OCI-LY7 (cell line): ENCODE measurements at regions of chr1 and their contacts with region 1.

Region 1: GRCh38 chr1:83637009-83637408 is 361.9 kb downstream of the TTLL7 start:
- DNase-seq: no peak
- H3K4me3 ChIP-seq: no peak overlapping the region
- H3K27ac ChIP-seq: no peak overlapping the region
- H3K4me1 ChIP-seq: peaks cover 10% of the 10 kb centered on the region
- CTCF ChIP-seq: no peak

Region 2: GRCh38 chr1:83626603-83627002 is 10.4 kb before region 1 on chr1:
- CTCF ChIA-PET with region 1: interaction called, 4 read pairs
- POLR2A ChIA-PET with region 1: interaction called, 17 read pairs
- intact Hi-C with region 1: no loop called
- DNase-seq: peak; percentile 85
- H3K4me3 ChIP-seq: peak overlapping the region; percentile 13
- H3K27ac ChIP-seq: peak overlapping the region; percentile 36
- H3K4me1 ChIP-seq: peaks cover 19% of the 10 kb centered on the region
- CTCF ChIP-seq: no peak